Left cardiac atrium (tissue), 4 donors: ENCODE measurements at regions of chr4 and their contacts with region 1.

Region 1: DNA sequence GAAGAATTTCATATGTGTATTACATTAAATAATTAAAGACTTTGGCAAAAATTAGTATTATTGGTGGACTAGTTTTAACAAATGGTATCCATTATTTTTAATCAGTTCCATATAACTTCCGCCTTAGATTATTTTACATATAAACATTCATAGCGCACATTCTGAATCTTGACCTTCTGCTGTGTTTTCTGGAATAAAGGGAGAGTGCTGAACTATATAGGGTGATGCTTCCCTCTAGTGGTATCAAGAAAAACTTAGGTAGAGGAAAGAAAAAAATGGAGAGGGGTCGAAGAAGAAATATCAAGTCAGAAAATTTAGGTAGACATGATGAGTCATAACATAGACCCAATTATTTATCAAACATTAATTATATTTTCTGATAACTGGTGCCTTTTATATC is 155.6 kb upstream of the PACRGL start:
- DNase-seq: no peak
- ATAC-seq: peak; percentile 47

Region 2: GRCh38 chr4:20299515-20299914 is 245.1 kb before region 1 on chr4:
- intact Hi-C with region 1: loop called in 1 of 2 experiments (anchors 10 kb)
- DNase-seq: no peak
- ATAC-seq: no peak

Region 3: GRCh38 chr4:20422398-20422797 is 122.2 kb before region 1 on chr4:
- intact Hi-C with region 1: loop called (anchors 1 to 10 kb)
- DNase-seq: peak; percentile 33
- ATAC-seq: peak; percentile 53 to 80